Sciatic nerve (tissue), 2 donors: ENCODE measurements at regions of chr18 and their contacts with region 1.

Region 1: GRCh38 chr18:78021196-78021595 is 771.5 kb downstream of the GALR1 start:
- DNase-seq: no peak
- ATAC-seq: no peak

Region 2: DNA sequence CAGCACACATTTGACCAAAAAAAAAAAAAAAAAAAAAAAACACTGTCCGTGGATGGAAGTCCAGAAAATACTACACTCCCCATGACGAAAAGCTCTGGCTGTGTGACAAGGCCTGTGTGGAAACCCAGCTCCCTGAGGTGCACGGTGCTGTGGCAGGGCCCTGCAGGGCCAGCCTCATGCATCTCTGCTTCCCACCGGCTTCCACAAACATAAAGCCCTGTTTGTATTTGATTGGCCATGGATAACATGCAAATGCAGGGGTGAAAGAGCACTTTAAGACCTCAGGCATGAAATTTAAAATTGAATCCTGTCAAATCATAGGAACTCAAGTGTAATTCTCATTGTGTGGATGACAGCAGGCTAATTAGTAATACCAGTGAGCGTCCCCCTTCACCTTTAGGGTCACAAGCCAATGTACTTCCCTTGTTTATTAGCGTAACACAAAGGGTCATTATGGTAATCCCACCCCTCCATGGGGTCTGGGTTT is 14.4 kb before region 1 on chr18:
- intact Hi-C with region 1: loop called (anchors 1 kb)
- DNase-seq: no peak
- ATAC-seq: no peak

Region 3: GRCh38 chr18:78082816-78083215 is 61.6 kb after region 1 on chr18:
- intact Hi-C with region 1: no loop called
- DNase-seq: no peak
- ATAC-seq: no peak

Region 4: GRCh38 chr18:78169174-78169864 is 148.1 kb after region 1 on chr18:
- intact Hi-C with region 1: no loop called
- DNase-seq: no peak
- ATAC-seq: no peak